Mammary epithelial cell (primary cell): ENCODE measurements at regions of chr4 and their contacts with region 1.

Region 1: GRCh38 chr4:152640058-152640833 is 39.6 kb downstream of the TMEM154 start:
- DNase-seq: no peak
- H3K4me3 ChIP-seq: no peak overlapping the region
- H3K27ac ChIP-seq: no peak overlapping the region
- H3K4me1 ChIP-seq: peaks cover 2% of the 10 kb centered on the region
- H3K27me3 ChIP-seq: no peaks in the 10 kb centered on the region
- CTCF ChIP-seq: peak; percentile 41 to 56

Region 2: DNA sequence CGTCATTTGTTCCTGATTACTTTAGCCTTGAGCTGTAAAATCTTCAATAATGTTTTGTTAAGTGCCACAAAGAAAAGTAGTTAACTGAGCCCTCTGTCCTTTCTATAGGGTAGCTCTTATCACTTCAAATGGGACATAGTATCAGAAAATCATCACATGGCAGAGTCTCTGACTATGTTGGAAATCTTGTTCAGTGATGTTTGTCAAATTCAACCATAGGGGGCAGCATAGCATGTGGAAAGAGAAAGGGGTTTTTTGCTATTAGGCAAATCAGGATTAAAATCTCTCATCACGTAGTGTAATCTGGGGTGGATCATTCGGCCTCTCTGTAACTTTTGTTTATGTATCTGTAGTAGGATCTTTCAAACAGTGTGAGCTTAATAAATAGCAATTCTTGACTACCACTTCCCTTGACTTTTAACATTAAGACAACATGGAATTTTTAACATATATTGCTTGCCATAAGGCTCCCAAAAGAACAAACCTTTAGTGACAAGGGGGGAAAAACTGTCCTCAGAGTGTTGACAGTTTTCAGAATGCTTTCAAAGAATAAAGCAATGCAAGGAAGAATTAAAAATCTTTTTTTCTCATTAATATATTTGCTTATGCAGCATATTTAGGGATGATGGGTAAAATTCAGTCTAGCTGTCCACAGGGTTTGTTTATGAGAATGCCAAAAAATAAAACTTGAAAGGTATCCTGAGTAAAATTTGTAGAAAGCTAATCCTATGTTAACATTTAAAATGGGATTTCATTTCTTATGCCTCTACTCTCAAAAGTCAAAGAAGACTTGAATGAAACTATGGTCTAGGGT is 231.5 kb before region 1 on chr4:
- CTCF ChIA-PET with region 1: no interaction called
- dilution Hi-C with region 1: no loop called
- in situ Hi-C with region 1: no loop called
- intact Hi-C with region 1: loop called (anchors 1 kb)
- DNase-seq: peak; percentile 56
- H3K4me3 ChIP-seq: no peak overlapping the region
- H3K27ac ChIP-seq: peak overlapping the region; percentile 31
- H3K4me1 ChIP-seq: no peaks in the 10 kb centered on the region
- H3K27me3 ChIP-seq: no peaks in the 10 kb centered on the region
- CTCF ChIP-seq: peak; percentile 66 to 71

Region 3: GRCh38 chr4:152454398-152455011 is 185.7 kb before region 1 on chr4:
- CTCF ChIA-PET with region 1: no interaction called
- dilution Hi-C with region 1: no loop called
- in situ Hi-C with region 1: no loop called
- intact Hi-C with region 1: loop called (anchors 1 kb)
- DNase-seq: peak; percentile 24
- H3K4me3 ChIP-seq: no peak overlapping the region
- H3K27ac ChIP-seq: no peak overlapping the region
- H3K4me1 ChIP-seq: no peaks in the 10 kb centered on the region
- H3K27me3 ChIP-seq: no peaks in the 10 kb centered on the region
- CTCF ChIP-seq: peak; percentile 61 to 78

Region 4: GRCh38 chr4:152591396-152591795 is 48.9 kb before region 1 on chr4:
- CTCF ChIA-PET with region 1: no interaction called
- dilution Hi-C with region 1: no loop called
- in situ Hi-C with region 1: no loop called
- intact Hi-C with region 1: no loop called
- DNase-seq: peak; percentile 42
- H3K4me3 ChIP-seq: peak overlapping the region in 2 of 3 experiments; percentile 6 to 25
- H3K27ac ChIP-seq: peak overlapping the region; percentile 50
- H3K4me1 ChIP-seq: peaks cover 23% of the 10 kb centered on the region
- H3K27me3 ChIP-seq: no peaks in the 10 kb centered on the region
- CTCF ChIP-seq: no peak